Naive thymus-derived CD4-positive, alpha-beta T cell (primary cell): ENCODE measurements at regions of chr14 and their contacts with region 1.

Region 1: GRCh38 chr14:99884834-99885648 is 91.8 kb downstream of the EML1 start:
- DNase-seq: peak in 7 of 9 donors; percentile 26 to 69 (median 58)
- ATAC-seq: peak; percentile 83
- H3K4me3 ChIP-seq: no peak overlapping the region
- H3K4me3 Mint-ChIP-seq: no peak overlapping the region
- H3K27ac ChIP-seq: no peak overlapping the region
- H3K27ac Mint-ChIP-seq: no peak overlapping the region
- H3K4me1 ChIP-seq: no peaks in the 10 kb centered on the region
- H3K4me1 Mint-ChIP-seq: no peaks in the 10 kb centered on the region
- H3K27me3 ChIP-seq: peaks cover 0 to 2% of the 10 kb centered on the region in 2 donors
- H3K27me3 Mint-ChIP-seq: peaks cover 3 to 16% (median 8%) of the 10 kb centered on the region in 5 donors

Region 2: GRCh38 chr14:99389174-99389826 is 495.7 kb before region 1 on chr14:
- CTCF ChIA-PET with region 1: no interaction called
- POLR2A ChIA-PET with region 1: no interaction called
- intact Hi-C with region 1: loop called in 1 of 2 experiments (anchors 2 kb)
- DNase-seq: peak in 3 of 9 donors; percentile 18 to 62 (median 20)
- ATAC-seq: peak; percentile 38
- H3K4me3 ChIP-seq: no peak overlapping the region
- H3K4me3 Mint-ChIP-seq: no peak overlapping the region
- H3K27ac ChIP-seq: no peak overlapping the region
- H3K27ac Mint-ChIP-seq: no peak overlapping the region
- H3K4me1 ChIP-seq: peaks cover 0 to 7% of the 10 kb centered on the region in 2 donors
- H3K4me1 Mint-ChIP-seq: peaks cover 5 to 23% (median 11%) of the 10 kb centered on the region in 7 donors
- H3K27me3 ChIP-seq: no peaks in the 10 kb centered on the region
- H3K27me3 Mint-ChIP-seq: peaks cover 0 to 11% (median 4%) of the 10 kb centered on the region in 5 donors

Region 3: GRCh38 chr14:99518441-99519346 is 366.3 kb before region 1 on chr14:
- CTCF ChIA-PET with region 1: no interaction called
- POLR2A ChIA-PET with region 1: no interaction called
- intact Hi-C with region 1: loop called (anchors 1 kb)
- DNase-seq: peak; percentile 69 to 91 (median 81)
- ATAC-seq: peak; percentile 84
- H3K4me3 ChIP-seq: no peak overlapping the region
- H3K4me3 Mint-ChIP-seq: no peak overlapping the region
- H3K27ac ChIP-seq: no peak overlapping the region
- H3K27ac Mint-ChIP-seq: peak overlapping the region in 1 of 9 donors; percentile 5
- H3K4me1 ChIP-seq: no peaks in the 10 kb centered on the region
- H3K4me1 Mint-ChIP-seq: no peaks in the 10 kb centered on the region
- H3K27me3 ChIP-seq: no peaks in the 10 kb centered on the region
- H3K27me3 Mint-ChIP-seq: no peaks in the 10 kb centered on the region

Region 4: DNA sequence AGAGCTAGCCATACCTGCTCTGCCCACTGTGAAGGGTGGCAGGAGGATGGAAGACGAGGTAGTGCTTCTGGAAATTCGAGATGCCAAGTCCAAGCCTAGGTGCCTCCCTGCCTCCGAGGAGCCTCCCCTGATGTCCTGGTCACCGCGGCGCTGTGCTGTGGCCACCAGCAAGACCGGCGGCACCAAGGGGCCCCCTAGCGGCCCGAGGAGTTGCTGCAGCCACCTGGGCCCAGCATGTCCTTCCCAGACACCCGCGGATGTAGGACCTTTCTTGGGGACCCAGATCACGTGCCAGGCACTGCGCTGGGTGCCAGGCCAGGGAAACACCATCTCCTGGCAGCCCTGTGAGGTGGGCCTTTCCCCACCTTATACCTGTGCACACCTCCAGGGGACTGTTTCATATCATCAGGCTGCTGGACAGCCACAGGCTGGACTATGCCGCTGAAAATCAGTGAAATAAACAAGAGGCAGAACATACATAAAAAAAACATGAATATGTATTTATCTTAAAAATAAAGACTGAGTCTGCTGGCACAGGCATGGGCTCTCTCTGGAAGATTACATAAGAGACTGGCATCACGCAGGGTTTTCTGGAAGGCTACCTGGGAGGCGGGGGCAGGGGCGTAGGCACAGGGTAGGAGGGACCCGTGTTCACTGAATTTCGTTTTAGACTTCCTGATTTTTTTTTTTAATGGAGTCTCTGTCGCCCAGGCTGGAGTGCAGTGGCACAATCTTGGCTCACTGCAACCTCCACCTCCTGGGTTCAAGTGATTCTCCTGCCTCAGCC is 256.0 kb before region 1 on chr14:
- CTCF ChIA-PET with region 1: no interaction called
- POLR2A ChIA-PET with region 1: no interaction called
- intact Hi-C with region 1: loop called in 1 of 2 experiments (anchors 1 kb)
- DNase-seq: peak; percentile 30 to 66 (median 45)
- ATAC-seq: peak; percentile 79
- H3K4me3 ChIP-seq: no peak overlapping the region
- H3K4me3 Mint-ChIP-seq: no peak overlapping the region
- H3K27ac ChIP-seq: no peak overlapping the region
- H3K27ac Mint-ChIP-seq: peak overlapping the region in 1 of 9 donors; percentile 51
- H3K4me1 ChIP-seq: no peaks in the 10 kb centered on the region
- H3K4me1 Mint-ChIP-seq: peaks cover 0 to 4% (median 2%) of the 10 kb centered on the region in 7 donors
- H3K27me3 ChIP-seq: peaks cover 0 to 4% of the 10 kb centered on the region in 2 donors
- H3K27me3 Mint-ChIP-seq: peaks cover 2 to 28% (median 9%) of the 10 kb centered on the region in 5 donors

Region 5: DNA sequence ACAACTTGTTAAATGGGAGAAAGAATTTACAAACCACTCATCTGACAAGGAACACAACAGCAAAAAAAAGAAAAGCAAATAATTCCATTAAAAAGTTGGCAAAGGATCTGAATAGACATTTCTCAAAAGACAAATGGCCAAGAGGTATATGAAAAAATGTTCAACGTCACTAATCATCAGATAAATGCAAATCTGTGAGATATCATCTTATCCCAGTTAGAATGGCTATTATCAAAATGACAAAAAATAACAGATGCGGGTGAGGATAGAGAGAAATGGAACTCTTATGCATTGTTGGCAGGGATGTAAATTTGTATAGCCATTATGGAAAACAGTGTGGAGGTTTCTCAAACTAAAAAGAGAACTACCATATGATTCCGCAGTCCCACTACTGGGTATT is 171.1 kb before region 1 on chr14:
- CTCF ChIA-PET with region 1: no interaction called
- POLR2A ChIA-PET with region 1: no interaction called
- intact Hi-C with region 1: no loop called
- DNase-seq: no peak
- ATAC-seq: no peak
- H3K4me3 ChIP-seq: no peak overlapping the region
- H3K4me3 Mint-ChIP-seq: no peak overlapping the region
- H3K27ac ChIP-seq: no peak overlapping the region
- H3K27ac Mint-ChIP-seq: no peak overlapping the region
- H3K4me1 ChIP-seq: no peaks in the 10 kb centered on the region
- H3K4me1 Mint-ChIP-seq: no peaks in the 10 kb centered on the region
- H3K27me3 ChIP-seq: peaks cover 0 to 4% of the 10 kb centered on the region in 2 donors
- H3K27me3 Mint-ChIP-seq: peaks cover 0 to 21% (median 9%) of the 10 kb centered on the region in 5 donors

Region 6: GRCh38 chr14:99729991-99730868 is 154.8 kb before region 1 on chr14:
- CTCF ChIA-PET with region 1: interaction called, 10 read pairs
- POLR2A ChIA-PET with region 1: no interaction called
- intact Hi-C with region 1: loop called (anchors 1 kb)
- DNase-seq: peak; percentile 26 to 85 (median 53)
- ATAC-seq: peak; percentile 71
- H3K4me3 ChIP-seq: no peak overlapping the region
- H3K4me3 Mint-ChIP-seq: peak overlapping the region in 8 of 10 donors; percentile 13 to 75 (median 50)
- H3K27ac ChIP-seq: no peak overlapping the region
- H3K27ac Mint-ChIP-seq: no peak overlapping the region
- H3K4me1 ChIP-seq: no peaks in the 10 kb centered on the region
- H3K4me1 Mint-ChIP-seq: peaks cover 0 to 6% (median 0%) of the 10 kb centered on the region in 7 donors
- H3K27me3 ChIP-seq: no peaks in the 10 kb centered on the region
- H3K27me3 Mint-ChIP-seq: peaks cover 7 to 45% (median 20%) of the 10 kb centered on the region in 5 donors

Region 7: DNA sequence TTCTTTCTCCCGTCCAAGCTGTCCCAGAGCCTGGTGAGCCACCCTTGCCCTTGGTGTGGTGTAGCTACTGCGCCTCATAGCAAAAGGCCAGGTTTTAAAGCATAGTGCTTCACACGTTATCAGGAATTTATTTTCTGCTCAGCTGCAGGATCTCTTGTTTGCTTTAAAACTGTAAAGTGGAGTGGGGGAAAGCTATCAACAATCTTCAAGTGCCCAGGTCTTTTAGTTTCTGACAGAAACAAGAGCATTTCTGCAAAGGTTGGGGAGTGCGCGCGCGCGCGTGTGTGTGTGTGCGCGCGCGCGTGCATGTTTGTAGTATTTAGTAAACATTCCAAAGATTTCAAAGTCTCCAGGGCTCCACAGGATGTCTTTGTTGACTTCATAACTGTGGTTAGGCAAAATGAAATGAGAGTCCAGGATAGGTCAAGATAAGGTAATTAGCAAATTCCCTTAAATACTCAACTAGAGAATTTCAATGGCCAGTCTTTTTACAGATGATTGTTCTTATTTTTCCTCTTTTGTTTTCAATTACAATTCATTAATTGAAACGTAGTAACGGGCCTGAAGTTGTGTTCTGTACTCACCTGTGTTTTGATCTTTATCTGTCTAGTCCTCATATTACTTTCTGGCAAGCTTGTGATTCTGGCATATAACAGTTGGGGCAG is 46.3 kb before region 1 on chr14:
- CTCF ChIA-PET with region 1: no interaction called
- POLR2A ChIA-PET with region 1: no interaction called
- intact Hi-C with region 1: no loop called
- DNase-seq: no peak
- ATAC-seq: no peak
- H3K4me3 ChIP-seq: no peak overlapping the region
- H3K4me3 Mint-ChIP-seq: no peak overlapping the region
- H3K27ac ChIP-seq: no peak overlapping the region
- H3K27ac Mint-ChIP-seq: no peak overlapping the region
- H3K4me1 ChIP-seq: no peaks in the 10 kb centered on the region
- H3K4me1 Mint-ChIP-seq: peaks cover 0 to 2% (median 0%) of the 10 kb centered on the region in 7 donors
- H3K27me3 ChIP-seq: peaks cover 0 to 5% of the 10 kb centered on the region in 2 donors
- H3K27me3 Mint-ChIP-seq: peaks cover 44 to 63% (median 53%) of the 10 kb centered on the region in 5 donors